Head of caudate nucleus (tissue), 42 donors: ENCODE measurements at regions of chr9 and their contacts with region 1.

Region 1: DNA sequence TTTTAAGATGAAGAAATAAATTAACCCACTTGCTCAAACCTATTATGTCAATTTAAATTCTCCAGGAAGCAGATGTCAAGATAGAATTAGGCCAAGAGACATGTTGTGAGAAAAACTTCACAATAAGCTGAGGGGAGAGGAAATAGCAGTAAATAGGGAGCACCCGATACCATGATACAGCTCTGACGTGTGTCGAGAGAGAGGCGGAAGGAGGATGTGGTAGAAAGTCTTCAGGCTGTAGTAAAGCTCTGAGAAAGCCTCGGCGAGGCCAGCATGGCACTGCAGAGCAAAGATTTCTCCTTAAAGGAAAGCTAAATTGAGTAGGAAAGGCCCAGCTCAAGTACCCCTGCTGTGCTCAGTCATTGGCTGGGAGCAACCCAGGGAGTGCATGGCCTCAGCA is 6.0 kb upstream of the PUM3 start:
- DNase-seq: no peak

Region 2: GRCh38 chr9:2014696-2015580 is 835.0 kb before region 1 on chr9 and contains the start of gene SMARCA2:
- intact Hi-C with region 1: loop called (anchors 10 kb)
- DNase-seq: peak; percentile 96 to 100 (median 99)

Region 3: DNA sequence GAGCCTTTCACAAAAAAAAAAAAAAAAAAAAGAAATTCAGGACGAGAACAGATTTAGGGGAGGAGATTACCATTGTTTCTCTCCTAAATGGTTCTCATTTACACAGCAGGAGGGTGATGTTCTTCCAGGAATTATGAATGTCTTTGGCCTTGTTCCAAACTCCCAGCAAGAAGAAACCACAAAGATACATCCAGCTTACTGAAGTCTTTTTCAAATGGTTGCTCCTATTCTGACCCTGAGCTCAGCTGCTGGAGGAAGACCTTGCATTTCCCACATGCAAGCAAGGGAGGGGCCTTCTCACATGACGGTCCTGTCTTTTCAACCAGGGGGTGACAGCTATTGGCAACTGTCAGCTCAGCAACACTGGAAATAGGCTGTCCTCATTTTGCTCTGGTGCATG is 431.3 kb before region 1 on chr9:
- intact Hi-C with region 1: no loop called
- DNase-seq: peak in 1 of 42 donors; percentile 6